ENCODE measurements at regions of chrX and their contacts with region 1.

Region 1: GRCh38 chrX:148601034-148601433 is 100.6 kb downstream of the AFF2 start:
- DNase-seq: no peak
- H3K4me3 Mint-ChIP-seq: no peak overlapping the region
- H3K27ac Mint-ChIP-seq: no peak overlapping the region
- H3K4me1 Mint-ChIP-seq: peaks cover 14% of the 10 kb centered on the region
- H3K27me3 Mint-ChIP-seq: no peaks in the 10 kb centered on the region

Region 2: DNA sequence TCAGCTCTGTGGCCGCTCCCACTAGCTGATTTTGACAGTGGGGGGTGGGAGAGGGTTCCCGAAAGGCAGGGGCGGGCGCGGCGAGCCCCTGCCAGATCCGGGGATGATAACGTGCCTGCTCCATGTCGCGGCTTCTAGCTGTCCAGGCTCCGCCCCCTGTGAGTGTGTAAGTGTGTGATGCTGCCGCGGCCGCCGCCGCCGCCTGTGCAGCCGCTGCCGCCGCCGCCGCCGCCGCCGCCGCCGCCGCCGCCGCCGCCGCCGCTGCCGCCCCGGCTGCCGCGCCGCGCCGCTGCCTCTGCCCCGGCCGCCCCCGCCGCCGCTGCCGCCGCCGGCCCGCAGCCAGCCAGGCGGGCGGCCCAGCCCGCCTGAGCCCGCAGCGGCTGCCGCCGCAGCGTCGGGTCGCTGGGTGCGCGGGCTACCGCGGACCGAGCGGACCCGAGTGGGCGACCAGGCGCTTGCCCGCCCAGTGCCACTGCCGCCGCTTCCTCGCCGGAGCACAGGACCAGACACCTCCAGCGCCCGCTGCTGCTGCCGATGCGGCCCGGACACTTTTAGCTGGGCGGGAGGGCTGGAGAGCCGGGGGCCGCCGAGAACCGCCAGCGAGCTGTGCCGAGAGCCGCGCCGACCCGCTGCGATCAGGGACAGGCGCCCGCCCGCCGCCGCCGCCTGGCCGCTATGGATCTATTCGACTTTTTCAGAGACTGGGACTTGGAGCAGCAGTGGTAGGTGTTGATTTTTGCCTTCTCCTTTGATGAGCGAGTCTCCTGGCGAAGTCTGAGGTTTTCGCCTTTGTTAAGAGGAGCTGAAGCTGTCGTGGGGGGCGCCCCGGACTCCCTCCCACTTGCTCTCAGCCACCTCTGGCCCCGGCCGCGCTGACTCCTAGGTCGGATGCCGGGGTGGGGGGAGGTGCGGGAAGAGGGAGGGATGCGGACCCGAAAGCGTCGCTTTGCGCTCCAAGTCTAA is 100.3 kb before region 1 on chrX and contains the start of gene AFF2:
- CTCF ChIA-PET with region 1: no interaction called
- intact Hi-C with region 1: loop called (anchors 5 kb)
- DNase-seq: peak; percentile 51
- H3K4me3 Mint-ChIP-seq: peak within 1 kb of the TSS; percentile 77
- H3K27ac Mint-ChIP-seq: no peak within 1 kb of the TSS
- H3K4me1 Mint-ChIP-seq: peaks cover 16% of the 10 kb centered on the region
- H3K27me3 Mint-ChIP-seq: peaks cover 2% of the 10 kb centered on the region
- total RNA-seq, gene AFF2: 1.7 to 2.0 TPM

Region 3: GRCh38 chrX:148804579-148805355 is 203.7 kb after region 1 on chrX:
- CTCF ChIA-PET with region 1: no interaction called
- intact Hi-C with region 1: no loop called
- DNase-seq: no peak
- H3K4me3 Mint-ChIP-seq: no peak overlapping the region
- H3K27ac Mint-ChIP-seq: no peak overlapping the region
- H3K4me1 Mint-ChIP-seq: no peaks in the 10 kb centered on the region
- H3K27me3 Mint-ChIP-seq: no peaks in the 10 kb centered on the region

Measured in activated naive CD4-positive, alpha-beta T cell treated with anti-CD3 and anti-CD28 coated beads for 36 hours (primary cell).